ENCODE measurements at regions of chr20 and their contacts with region 1.

Region 1: DNA sequence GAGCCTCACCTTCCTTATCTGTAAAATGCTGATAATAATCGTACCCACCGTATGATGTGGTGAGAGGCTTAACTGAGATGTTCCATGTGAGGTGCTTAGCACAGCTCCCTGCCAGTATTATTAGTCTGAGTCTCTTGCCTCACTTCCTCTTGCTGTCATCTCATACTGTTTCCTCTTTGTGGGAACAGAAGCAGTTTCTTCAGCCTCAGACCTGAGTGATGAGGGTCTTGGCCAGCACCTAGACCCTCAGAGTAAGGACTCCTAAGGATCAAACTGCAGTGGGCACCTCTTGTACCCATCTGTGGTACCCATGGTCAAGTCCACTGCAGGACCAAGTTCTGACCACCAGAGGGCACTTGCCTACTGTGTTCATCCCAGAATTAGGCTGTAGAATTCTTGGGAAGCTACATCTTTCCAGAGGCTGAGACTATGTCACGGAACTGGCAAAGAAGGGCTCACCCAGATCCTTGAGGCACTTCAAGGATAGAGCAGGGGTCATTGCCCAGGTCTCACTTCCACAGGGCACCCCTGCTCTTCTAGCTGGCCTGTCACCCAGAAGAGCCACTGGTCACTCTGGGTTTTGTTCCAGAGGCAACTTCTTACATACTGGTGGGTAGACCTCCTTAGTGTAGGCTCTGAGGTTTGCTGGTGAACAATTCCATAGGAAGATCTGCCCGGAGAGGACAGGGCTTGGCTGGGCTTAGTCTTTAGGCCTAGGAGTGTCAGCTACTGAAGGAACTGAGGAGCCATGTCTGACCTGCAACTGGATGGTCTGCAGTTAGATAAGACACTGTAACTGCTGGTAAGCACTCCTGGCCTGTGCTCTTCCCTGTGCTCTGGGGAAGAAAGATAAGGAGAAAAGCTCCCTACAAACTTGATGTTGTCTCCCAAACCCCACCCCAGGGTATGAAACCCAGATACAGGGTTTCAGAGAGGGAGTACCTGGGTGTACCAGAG is 20.6 kb upstream of the SGK2 start:
- DNase-seq: peak; percentile 14
- H3K4me3 Mint-ChIP-seq: no peak overlapping the region
- H3K27ac Mint-ChIP-seq: no peak overlapping the region
- H3K4me1 Mint-ChIP-seq: peaks cover 2% of the 10 kb centered on the region
- H3K27me3 Mint-ChIP-seq: no peaks in the 10 kb centered on the region

Region 2: GRCh38 chr20:43525021-43525420 is 13.2 kb before region 1 on chr20:
- intact Hi-C with region 1: no loop called
- DNase-seq: no peak
- H3K4me3 Mint-ChIP-seq: no peak overlapping the region
- H3K27ac Mint-ChIP-seq: no peak overlapping the region
- H3K4me1 Mint-ChIP-seq: no peaks in the 10 kb centered on the region
- H3K27me3 Mint-ChIP-seq: peaks cover 2% of the 10 kb centered on the region

Region 3: DNA sequence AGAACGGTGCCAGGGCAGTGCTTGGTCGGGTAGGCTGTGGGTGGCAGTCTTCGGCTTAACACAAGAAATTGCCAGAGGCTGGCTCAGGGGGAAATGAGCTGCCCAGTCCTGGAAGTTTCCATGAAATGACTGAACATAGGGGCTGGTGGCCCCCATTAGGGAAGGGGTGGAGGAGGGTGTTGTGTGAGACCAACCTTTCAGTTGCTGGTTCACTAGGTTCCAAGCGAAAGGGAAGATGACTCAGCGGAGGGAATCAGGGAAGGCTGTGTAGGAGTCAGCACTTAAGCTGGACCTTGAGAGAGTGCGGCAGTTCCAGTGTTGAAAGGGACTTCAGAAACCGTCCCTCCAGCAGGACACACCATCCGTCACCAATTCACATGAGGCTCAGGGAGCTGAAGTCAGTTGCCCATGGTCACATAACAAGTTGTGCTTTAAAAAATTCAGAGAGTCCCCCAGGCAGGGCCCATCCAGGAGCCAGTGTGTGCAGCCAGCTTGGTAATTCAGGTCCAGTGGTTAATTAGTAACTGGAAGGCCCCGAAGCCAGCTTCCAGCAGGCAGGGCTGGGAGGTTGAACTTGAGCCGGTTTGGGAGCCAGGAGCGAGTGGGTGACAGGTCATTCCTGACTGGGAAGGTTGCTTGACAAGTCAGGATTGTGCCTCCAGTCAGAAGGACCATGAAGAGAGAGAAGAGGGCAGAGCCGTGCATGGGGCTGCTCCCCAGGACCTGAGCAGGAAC is 20.4 kb after region 1 on chr20 and contains the start of gene SGK2:
- intact Hi-C with region 1: loop called (anchors 1 kb)
- DNase-seq: no peak
- H3K4me3 Mint-ChIP-seq: no peak within 1 kb of the TSS
- H3K27ac Mint-ChIP-seq: no peak within 1 kb of the TSS
- H3K4me1 Mint-ChIP-seq: no peaks in the 10 kb centered on the region
- H3K27me3 Mint-ChIP-seq: peaks cover 3% of the 10 kb centered on the region
- total RNA-seq, gene SGK2: 0.25 and 0.32 TPM in 2 replicates

Region 4: GRCh38 chr20:43691928-43692524 is 153.8 kb after region 1 on chr20:
- intact Hi-C with region 1: loop called (anchors 1 kb)
- DNase-seq: peak; percentile 41
- H3K4me3 Mint-ChIP-seq: no peak overlapping the region
- H3K27ac Mint-ChIP-seq: no peak overlapping the region
- H3K4me1 Mint-ChIP-seq: peaks cover 4% of the 10 kb centered on the region
- H3K27me3 Mint-ChIP-seq: no peaks in the 10 kb centered on the region

Region 5: GRCh38 chr20:44056010-44056698 is 518.0 kb after region 1 on chr20:
- intact Hi-C with region 1: no loop called
- DNase-seq: peak; percentile 10
- H3K4me3 Mint-ChIP-seq: no peak overlapping the region
- H3K27ac Mint-ChIP-seq: no peak overlapping the region
- H3K4me1 Mint-ChIP-seq: peaks cover 5% of the 10 kb centered on the region
- H3K27me3 Mint-ChIP-seq: peaks cover 28% of the 10 kb centered on the region

Region 6: GRCh38 chr20:44092551-44093248 is 554.5 kb after region 1 on chr20:
- intact Hi-C with region 1: loop called (anchors 5 kb)
- DNase-seq: no peak
- H3K4me3 Mint-ChIP-seq: no peak overlapping the region
- H3K27ac Mint-ChIP-seq: no peak overlapping the region
- H3K4me1 Mint-ChIP-seq: peaks cover 4% of the 10 kb centered on the region
- H3K27me3 Mint-ChIP-seq: peaks cover 11% of the 10 kb centered on the region

Region 7: GRCh38 chr20:44254073-44254472 is 715.9 kb after region 1 on chr20:
- intact Hi-C with region 1: no loop called
- DNase-seq: no peak
- H3K4me3 Mint-ChIP-seq: no peak overlapping the region
- H3K27ac Mint-ChIP-seq: no peak overlapping the region
- H3K4me1 Mint-ChIP-seq: no peaks in the 10 kb centered on the region
- H3K27me3 Mint-ChIP-seq: no peaks in the 10 kb centered on the region